ENCODE measurements at regions of chr22 and their contacts with region 1.

Region 1: GRCh38 chr22:36470162-36470993 is 11.1 kb downstream of the TXN2 start:
- DNase-seq: peak; percentile 88
- ATAC-seq: peak; percentile 93
- H3K4me3 ChIP-seq: no peak overlapping the region
- H3K4me3 Mint-ChIP-seq: no peak overlapping the region
- H3K27ac ChIP-seq: no peak overlapping the region
- H3K27ac Mint-ChIP-seq: peak overlapping the region; percentile 72
- H3K4me1 ChIP-seq: peaks cover 6 to 17% of the 10 kb centered on the region in 2 donors
- H3K4me1 Mint-ChIP-seq: peaks cover 14% of the 10 kb centered on the region
- H3K27me3 ChIP-seq: no peaks in the 10 kb centered on the region
- H3K27me3 Mint-ChIP-seq: no peaks in the 10 kb centered on the region
- CTCF ChIP-seq: peak; percentile 96

Region 2: DNA sequence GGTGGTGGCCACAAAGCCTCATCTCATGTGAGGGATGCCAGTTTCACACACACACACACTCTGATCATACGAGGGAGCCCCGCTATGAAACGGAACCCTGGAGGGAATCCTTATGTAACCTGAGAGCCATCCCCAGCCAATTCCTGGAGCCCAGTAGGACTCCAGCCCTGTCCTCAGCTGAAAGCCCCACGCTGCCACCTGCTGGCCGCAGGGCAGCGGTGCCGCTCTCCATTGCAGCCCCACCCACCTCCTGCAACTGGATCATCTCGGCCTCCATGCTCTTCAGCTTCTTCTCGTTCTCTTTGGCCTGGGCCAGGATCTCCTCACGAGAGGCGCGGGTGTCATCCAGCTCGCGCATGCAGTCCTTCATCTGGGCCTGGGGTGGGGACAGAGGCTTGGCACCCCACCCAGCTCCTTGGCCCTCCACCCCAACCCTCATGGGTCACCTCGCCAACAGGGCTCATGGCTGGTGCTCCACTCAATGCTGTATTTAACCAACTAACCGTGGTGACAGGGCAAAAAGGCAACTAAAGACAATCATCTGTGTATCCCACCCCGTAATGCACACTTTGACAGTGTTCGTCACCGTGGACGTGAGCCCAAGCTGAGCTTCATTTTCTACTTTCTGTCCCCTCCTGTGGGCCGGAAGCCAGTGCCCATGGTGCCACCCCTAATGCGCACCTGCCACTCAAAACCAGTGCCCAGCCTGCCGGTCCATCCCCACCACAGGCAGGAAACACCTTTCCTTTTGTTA is 183.7 kb before region 1 on chr22:
- CTCF ChIA-PET with region 1: interaction called, 607 read pairs
- POLR2A ChIA-PET with region 1: no interaction called
- intact Hi-C with region 1: no loop called
- DNase-seq: peak; percentile 74
- ATAC-seq: peak; percentile 87
- H3K4me3 ChIP-seq: no peak overlapping the region
- H3K4me3 Mint-ChIP-seq: no peak overlapping the region
- H3K27ac ChIP-seq: peak overlapping the region in 1 of 2 donors; percentile 28
- H3K27ac Mint-ChIP-seq: peak overlapping the region; percentile 12
- H3K4me1 ChIP-seq: no peaks in the 10 kb centered on the region
- H3K4me1 Mint-ChIP-seq: no peaks in the 10 kb centered on the region
- H3K27me3 ChIP-seq: no peaks in the 10 kb centered on the region
- H3K27me3 Mint-ChIP-seq: no peaks in the 10 kb centered on the region
- CTCF ChIP-seq: peak; percentile 86

Region 3: GRCh38 chr22:36331306-36331911 is 139.0 kb before region 1 on chr22:
- CTCF ChIA-PET with region 1: interaction called, 58 read pairs
- POLR2A ChIA-PET with region 1: interaction called, 3 read pairs
- intact Hi-C with region 1: loop called (anchors 1 kb)
- DNase-seq: peak; percentile 87
- ATAC-seq: peak; percentile 66
- H3K4me3 ChIP-seq: peak overlapping the region in 4 of 5 experiments; percentile 14 to 58 (median 30)
- H3K4me3 Mint-ChIP-seq: peak overlapping the region; percentile 84
- H3K27ac ChIP-seq: peak overlapping the region; percentile 83 to 86
- H3K27ac Mint-ChIP-seq: peak overlapping the region; percentile 97
- H3K4me1 ChIP-seq: peaks cover 78 to 90% of the 10 kb centered on the region in 2 donors
- H3K4me1 Mint-ChIP-seq: peaks cover 89% of the 10 kb centered on the region
- H3K27me3 ChIP-seq: no peaks in the 10 kb centered on the region
- H3K27me3 Mint-ChIP-seq: no peaks in the 10 kb centered on the region
- CTCF ChIP-seq: no peak

Region 4: GRCh38 chr22:36359181-36359996 is 111.0 kb before region 1 on chr22:
- CTCF ChIA-PET with region 1: interaction called, 13 read pairs
- POLR2A ChIA-PET with region 1: no interaction called
- intact Hi-C with region 1: loop called (anchors 2 kb)
- DNase-seq: peak; percentile 84
- ATAC-seq: peak; percentile 79
- H3K4me3 ChIP-seq: peak overlapping the region in 1 of 5 experiments; percentile 18
- H3K4me3 Mint-ChIP-seq: peak overlapping the region; percentile 74
- H3K27ac ChIP-seq: peak overlapping the region; percentile 56 to 92
- H3K27ac Mint-ChIP-seq: peak overlapping the region; percentile 81
- H3K4me1 ChIP-seq: peaks cover 95 to 98% of the 10 kb centered on the region in 2 donors
- H3K4me1 Mint-ChIP-seq: peaks cover 93% of the 10 kb centered on the region
- H3K27me3 ChIP-seq: no peaks in the 10 kb centered on the region
- H3K27me3 Mint-ChIP-seq: no peaks in the 10 kb centered on the region
- CTCF ChIP-seq: no peak

Region 5: DNA sequence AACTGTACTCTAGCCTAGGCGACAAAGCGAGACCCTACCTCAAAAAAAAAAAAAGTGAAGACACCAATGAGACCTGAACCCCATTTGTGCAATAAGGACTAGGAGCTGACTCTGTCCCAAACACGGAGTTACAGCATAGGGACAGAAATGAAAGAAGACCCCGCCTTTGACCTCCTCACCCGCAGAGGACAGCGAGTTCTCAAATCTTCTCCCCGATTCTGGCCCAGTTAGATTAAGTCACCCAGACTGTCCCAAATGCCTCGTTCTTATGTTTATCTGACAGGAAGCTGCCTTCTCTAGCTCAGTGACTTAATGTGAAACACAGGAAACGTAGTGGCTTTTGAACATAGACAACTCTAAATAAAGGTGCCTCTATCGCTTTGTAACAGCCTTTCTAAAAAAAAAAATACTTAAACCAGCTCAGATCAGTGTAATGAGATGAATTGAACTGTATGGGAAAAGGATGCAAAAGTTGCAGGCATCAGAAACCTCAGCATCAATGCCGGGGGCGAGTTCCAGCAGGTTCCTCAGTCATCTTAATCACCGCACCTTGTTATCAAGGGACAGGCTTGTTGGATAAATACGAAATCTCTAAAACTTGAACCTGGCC is 93.3 kb before region 1 on chr22:
- CTCF ChIA-PET with region 1: interaction called, 10 read pairs
- POLR2A ChIA-PET with region 1: interaction called, 4 read pairs
- intact Hi-C with region 1: no loop called
- DNase-seq: peak; percentile 71
- ATAC-seq: peak; percentile 71
- H3K4me3 ChIP-seq: peak overlapping the region in 4 of 5 experiments; percentile 7 to 59 (median 38)
- H3K4me3 Mint-ChIP-seq: peak overlapping the region; percentile 70
- H3K27ac ChIP-seq: peak overlapping the region; percentile 88 to 90
- H3K27ac Mint-ChIP-seq: peak overlapping the region; percentile 88
- H3K4me1 ChIP-seq: peaks cover 98 to 99% of the 10 kb centered on the region in 2 donors
- H3K4me1 Mint-ChIP-seq: peaks cover 86% of the 10 kb centered on the region
- H3K27me3 ChIP-seq: no peaks in the 10 kb centered on the region
- H3K27me3 Mint-ChIP-seq: no peaks in the 10 kb centered on the region
- CTCF ChIP-seq: no peak

Region 6: GRCh38 chr22:36409911-36410756 is 60.2 kb before region 1 on chr22:
- CTCF ChIA-PET with region 1: interaction called, 35 read pairs
- POLR2A ChIA-PET with region 1: no interaction called
- intact Hi-C with region 1: loop called (anchors 1 kb)
- DNase-seq: peak; percentile 84
- ATAC-seq: peak; percentile 63
- H3K4me3 ChIP-seq: peak overlapping the region in 4 of 5 experiments; percentile 27 to 47 (median 38)
- H3K4me3 Mint-ChIP-seq: peak overlapping the region; percentile 87
- H3K27ac ChIP-seq: peak overlapping the region; percentile 79 to 82
- H3K27ac Mint-ChIP-seq: peak overlapping the region; percentile 92
- H3K4me1 ChIP-seq: peaks cover 54 to 70% of the 10 kb centered on the region in 2 donors
- H3K4me1 Mint-ChIP-seq: peaks cover 59% of the 10 kb centered on the region
- H3K27me3 ChIP-seq: no peaks in the 10 kb centered on the region
- H3K27me3 Mint-ChIP-seq: no peaks in the 10 kb centered on the region
- CTCF ChIP-seq: no peak

Region 7: GRCh38 chr22:36481393-36482168 is 11.2 kb after region 1 on chr22 and contains the start of gene TXN2:
- CTCF ChIA-PET with region 1: interaction called, 26 read pairs
- POLR2A ChIA-PET with region 1: interaction called, 5 read pairs
- intact Hi-C with region 1: no loop called
- DNase-seq: peak; percentile 98
- ATAC-seq: peak; percentile 87
- H3K4me3 ChIP-seq: peak within 1 kb of the TSS; percentile 82 to 90 (median 86)
- H3K4me3 Mint-ChIP-seq: peak within 1 kb of the TSS; percentile 95
- H3K27ac ChIP-seq: peak within 1 kb of the TSS; percentile 95 to 98
- H3K27ac Mint-ChIP-seq: peak within 1 kb of the TSS; percentile 93
- H3K4me1 ChIP-seq: peaks cover 11 to 18% of the 10 kb centered on the region in 2 donors
- H3K4me1 Mint-ChIP-seq: peaks cover 17% of the 10 kb centered on the region
- H3K27me3 ChIP-seq: no peaks in the 10 kb centered on the region
- H3K27me3 Mint-ChIP-seq: no peaks in the 10 kb centered on the region
- CTCF ChIP-seq: no peak
- total RNA-seq, gene TXN2: 37.4 and 39.6 TPM in 2 replicates

Region 8: DNA sequence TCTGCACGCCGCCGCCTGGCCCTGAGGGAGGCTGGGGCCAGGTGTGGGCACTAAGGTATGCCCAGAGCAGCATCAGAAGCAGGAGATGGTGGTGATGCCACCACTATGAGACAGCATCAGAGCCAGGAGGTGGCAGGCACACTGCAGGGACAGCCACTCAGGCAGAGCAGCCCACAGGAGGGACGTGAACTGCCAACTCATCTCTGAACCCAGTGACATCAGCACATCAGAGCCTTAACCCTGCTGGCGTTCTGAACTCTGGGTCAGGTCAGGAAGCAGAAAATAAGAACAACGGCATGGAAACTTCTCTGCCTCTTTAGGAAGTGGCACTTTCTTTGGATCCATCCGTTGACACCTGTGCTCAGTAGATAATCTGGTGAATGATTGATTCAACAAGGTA is 320.3 kb after region 1 on chr22:
- CTCF ChIA-PET with region 1: no interaction called
- POLR2A ChIA-PET with region 1: no interaction called
- intact Hi-C with region 1: no loop called
- DNase-seq: no peak
- ATAC-seq: peak; percentile 54
- H3K4me3 ChIP-seq: no peak overlapping the region
- H3K4me3 Mint-ChIP-seq: no peak overlapping the region
- H3K27ac ChIP-seq: no peak overlapping the region
- H3K27ac Mint-ChIP-seq: no peak overlapping the region
- H3K4me1 ChIP-seq: peaks cover 0 to 6% of the 10 kb centered on the region in 2 donors
- H3K4me1 Mint-ChIP-seq: no peaks in the 10 kb centered on the region
- H3K27me3 ChIP-seq: peaks cover 0 to 6% (median 1%) of the 10 kb centered on the region in 4 experiments
- H3K27me3 Mint-ChIP-seq: peaks cover 32% of the 10 kb centered on the region
- CTCF ChIP-seq: no peak